MCF 10A (cell line): ENCODE measurements at regions of chr1 and their contacts with region 1.

Region 1: GRCh38 chr1:203038891-203039608 is 12.8 kb downstream of the PPFIA4 start:
- DNase-seq: peak; percentile 90
- H3K4me3 Mint-ChIP-seq: no peak overlapping the region
- H3K27ac Mint-ChIP-seq: no peak overlapping the region
- H3K4me1 Mint-ChIP-seq: peaks cover 18% of the 10 kb centered on the region
- H3K27me3 Mint-ChIP-seq: no peaks in the 10 kb centered on the region
- CTCF ChIP-seq: peak; percentile 100

Region 2: GRCh38 chr1:202890392-202890791 is 148.7 kb before region 1 on chr1:
- CTCF ChIA-PET with region 1: no interaction called
- POLR2A ChIA-PET with region 1: no interaction called
- intact Hi-C with region 1: no loop called
- DNase-seq: no peak
- H3K4me3 Mint-ChIP-seq: no peak overlapping the region
- H3K27ac Mint-ChIP-seq: no peak overlapping the region
- H3K4me1 Mint-ChIP-seq: peaks cover 7% of the 10 kb centered on the region
- H3K27me3 Mint-ChIP-seq: no peaks in the 10 kb centered on the region
- CTCF ChIP-seq: no peak

Region 3: DNA sequence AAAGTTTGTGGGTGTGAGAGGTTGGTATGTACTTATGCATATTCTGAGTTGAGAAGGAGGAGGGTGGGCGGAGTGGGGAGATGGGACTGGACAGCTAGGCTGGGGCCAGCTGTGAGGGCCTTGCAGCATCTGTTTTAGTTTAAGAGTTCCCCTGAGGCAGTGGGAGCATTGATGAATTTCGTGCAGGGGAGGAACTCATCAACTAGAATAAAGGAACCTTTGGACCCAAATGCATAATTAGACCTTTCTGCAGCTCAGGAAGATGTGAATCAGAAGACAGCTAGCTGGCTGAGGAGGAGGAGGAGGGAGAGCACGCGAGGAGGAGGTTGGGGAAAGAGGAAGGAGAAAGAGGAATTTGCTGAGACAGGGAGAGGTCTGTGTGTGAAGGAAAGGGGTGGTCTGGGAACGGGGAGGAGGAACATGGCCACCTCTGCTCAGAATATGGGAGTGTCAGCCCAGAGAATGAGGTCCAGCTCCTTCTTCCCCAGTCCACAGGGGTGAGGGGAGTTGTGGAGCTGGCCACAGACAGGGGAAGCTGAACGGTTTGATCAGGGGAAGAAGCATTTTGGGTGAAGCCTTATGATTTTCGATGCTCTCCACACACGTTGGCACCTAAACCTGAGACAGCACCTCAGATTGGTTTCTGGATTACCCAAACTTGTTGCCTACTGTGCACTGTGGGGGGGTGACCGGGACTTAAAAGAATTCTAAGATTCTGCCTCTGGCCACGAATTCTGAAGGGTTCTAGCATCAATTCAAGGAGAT is 19.0 kb after region 1 on chr1:
- CTCF ChIA-PET with region 1: interaction called, 250 read pairs
- POLR2A ChIA-PET with region 1: interaction called, 6 read pairs
- intact Hi-C with region 1: loop called (anchors 1 kb)
- DNase-seq: no peak
- H3K4me3 Mint-ChIP-seq: no peak overlapping the region
- H3K27ac Mint-ChIP-seq: no peak overlapping the region
- H3K4me1 Mint-ChIP-seq: no peaks in the 10 kb centered on the region
- H3K27me3 Mint-ChIP-seq: peaks cover 21% of the 10 kb centered on the region
- CTCF ChIP-seq: no peak

Region 4: DNA sequence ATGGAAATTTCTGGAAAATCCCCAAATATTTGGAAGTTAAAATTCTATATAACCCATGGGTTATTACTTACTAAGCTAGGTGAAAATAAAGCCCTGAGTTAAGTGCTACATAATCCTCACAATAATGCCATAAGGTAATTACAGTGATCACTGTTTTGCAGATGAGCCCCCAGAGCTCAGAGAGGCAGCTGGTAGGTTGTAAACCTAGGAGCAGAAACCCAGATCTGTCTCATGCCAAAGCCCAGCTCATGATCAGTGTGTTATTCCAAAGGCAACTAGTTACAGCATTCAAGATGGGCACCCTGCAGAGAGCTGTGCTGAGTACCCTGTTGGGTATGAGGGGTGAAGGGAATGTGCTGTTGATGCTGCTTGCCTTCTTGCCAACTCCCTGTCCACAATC is 57.5 kb after region 1 on chr1:
- CTCF ChIA-PET with region 1: interaction called, 15 read pairs
- POLR2A ChIA-PET with region 1: interaction called, 3 read pairs
- intact Hi-C with region 1: no loop called
- DNase-seq: no peak
- H3K4me3 Mint-ChIP-seq: no peak overlapping the region
- H3K27ac Mint-ChIP-seq: no peak overlapping the region
- H3K4me1 Mint-ChIP-seq: no peaks in the 10 kb centered on the region
- H3K27me3 Mint-ChIP-seq: peaks cover 13% of the 10 kb centered on the region
- CTCF ChIP-seq: no peak

Region 5: DNA sequence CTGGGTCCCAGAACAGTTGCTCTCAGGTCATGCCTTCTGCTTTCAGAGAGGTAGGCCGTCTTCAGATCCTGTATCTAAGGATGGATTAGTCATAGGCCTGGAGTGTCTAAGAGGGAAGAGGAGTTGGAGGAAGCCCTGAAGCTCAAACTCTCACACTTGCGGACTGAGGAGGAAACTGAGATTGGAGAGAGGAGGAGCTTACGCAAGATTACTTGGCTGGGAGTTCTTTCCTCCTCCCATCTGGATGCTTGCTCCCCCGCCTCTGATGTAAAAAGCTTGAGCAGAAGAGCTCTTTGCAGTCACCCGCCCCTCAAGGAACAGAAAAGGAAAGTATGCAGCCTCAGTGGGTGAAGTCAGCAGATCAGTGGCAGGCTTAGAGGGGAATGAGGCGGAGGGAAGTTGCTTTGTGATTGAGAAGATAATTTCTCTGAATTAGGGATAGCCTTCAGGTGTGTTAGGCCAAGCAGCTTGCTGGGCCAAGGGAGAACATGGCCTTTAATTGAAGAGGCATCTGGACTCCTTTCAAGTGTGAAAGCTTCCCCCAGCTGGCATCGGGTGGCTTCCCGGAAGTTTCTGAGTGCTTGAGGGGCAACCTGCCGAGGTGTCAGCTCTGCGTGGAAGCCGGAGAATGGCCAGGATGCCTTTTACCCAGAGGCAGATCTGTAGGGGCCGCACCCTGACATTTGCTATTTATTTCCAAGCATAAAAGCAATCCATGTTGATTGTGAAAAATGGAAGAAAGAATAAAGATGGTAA is 95.1 kb after region 1 on chr1:
- CTCF ChIA-PET with region 1: interaction called, 103 read pairs
- POLR2A ChIA-PET with region 1: no interaction called
- intact Hi-C with region 1: no loop called
- DNase-seq: peak; percentile 89
- H3K4me3 Mint-ChIP-seq: no peak overlapping the region
- H3K27ac Mint-ChIP-seq: no peak overlapping the region
- H3K4me1 Mint-ChIP-seq: peaks cover 17% of the 10 kb centered on the region
- H3K27me3 Mint-ChIP-seq: no peaks in the 10 kb centered on the region
- CTCF ChIP-seq: no peak

Region 6: GRCh38 chr1:203163891-203164635 is 125.0 kb after region 1 on chr1:
- CTCF ChIA-PET with region 1: interaction called, 334 read pairs
- POLR2A ChIA-PET with region 1: interaction called, 3 read pairs
- intact Hi-C with region 1: no loop called
- DNase-seq: no peak
- H3K4me3 Mint-ChIP-seq: no peak overlapping the region
- H3K27ac Mint-ChIP-seq: no peak overlapping the region
- H3K4me1 Mint-ChIP-seq: peaks cover 5% of the 10 kb centered on the region
- H3K27me3 Mint-ChIP-seq: peaks cover 14% of the 10 kb centered on the region
- CTCF ChIP-seq: no peak

Region 7: GRCh38 chr1:203202431-203203245 is 163.6 kb after region 1 on chr1:
- CTCF ChIA-PET with region 1: interaction called, 45 read pairs
- POLR2A ChIA-PET with region 1: interaction called, 5 read pairs
- intact Hi-C with region 1: no loop called
- DNase-seq: peak; percentile 97
- H3K4me3 Mint-ChIP-seq: no peak overlapping the region
- H3K27ac Mint-ChIP-seq: no peak overlapping the region
- H3K4me1 Mint-ChIP-seq: peaks cover 22% of the 10 kb centered on the region
- H3K27me3 Mint-ChIP-seq: peaks cover 7% of the 10 kb centered on the region
- CTCF ChIP-seq: no peak

Region 8: DNA sequence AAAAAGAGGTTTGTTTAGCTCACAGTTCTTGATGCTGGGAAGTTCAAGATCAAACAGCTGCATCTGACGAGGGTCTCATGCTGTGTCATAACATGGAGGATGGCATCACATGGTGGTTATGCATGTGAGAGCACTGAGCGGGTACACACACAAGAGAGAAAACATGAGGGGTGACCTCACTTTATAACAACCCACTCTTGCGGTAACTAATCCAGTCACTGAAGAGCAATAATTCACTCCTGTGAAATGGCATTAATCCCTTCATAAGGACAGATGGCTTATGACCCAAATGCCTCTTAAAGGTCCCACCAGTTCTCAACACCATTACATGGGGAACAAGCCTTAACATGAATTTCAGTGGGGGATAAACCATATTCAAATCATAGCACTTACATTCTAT is 213.6 kb after region 1 on chr1:
- CTCF ChIA-PET with region 1: interaction called, 16 read pairs
- POLR2A ChIA-PET with region 1: no interaction called
- intact Hi-C with region 1: no loop called
- DNase-seq: no peak
- H3K4me3 Mint-ChIP-seq: no peak overlapping the region
- H3K27ac Mint-ChIP-seq: no peak overlapping the region
- H3K4me1 Mint-ChIP-seq: peaks cover 7% of the 10 kb centered on the region
- H3K27me3 Mint-ChIP-seq: peaks cover 79% of the 10 kb centered on the region
- CTCF ChIP-seq: no peak